PC-9 (cell line): ENCODE measurements at regions of chr9 and their contacts with region 1.

Region 1: DNA sequence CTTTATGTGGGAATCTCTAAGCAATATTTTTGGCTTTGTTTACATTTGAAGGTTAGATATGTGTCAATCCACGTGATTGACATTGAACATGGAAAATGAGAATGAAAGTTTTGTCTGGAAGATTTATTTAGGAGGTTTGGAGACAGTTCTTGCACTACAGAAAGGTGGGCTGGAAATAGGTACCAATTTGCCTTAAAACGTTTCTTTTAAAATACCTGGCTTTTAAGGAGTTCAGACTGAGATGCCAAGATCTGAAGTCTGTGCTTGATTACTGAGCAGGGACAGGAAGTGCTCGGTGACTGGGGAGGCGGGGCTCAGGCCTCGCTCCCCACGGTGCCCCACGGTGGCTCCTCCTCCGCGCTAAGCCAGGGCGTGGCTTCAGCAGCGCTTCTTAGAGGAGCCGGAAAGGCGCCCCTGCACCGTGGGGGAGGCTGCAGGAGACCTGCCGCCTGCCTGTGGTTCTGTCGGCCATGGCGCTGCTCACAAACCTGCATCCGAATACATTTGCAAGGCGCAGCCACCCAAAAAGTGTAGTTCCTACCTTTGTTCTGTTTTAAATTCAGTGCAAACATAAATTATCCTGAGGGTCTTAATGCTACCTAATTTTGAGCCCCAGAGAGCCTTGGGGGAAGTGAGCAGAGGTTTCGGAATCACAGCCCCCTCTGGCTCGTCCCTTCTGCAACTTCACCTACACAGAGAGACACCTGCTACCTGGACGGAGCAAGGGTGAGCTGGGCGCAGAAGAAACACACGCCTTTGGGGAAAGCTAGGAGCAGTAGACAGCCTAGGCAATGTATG is 49.2 kb downstream of the USP20 start:
- DNase-seq: peak; percentile 78 to 92
- H3K4me3 ChIP-seq: peak overlapping the region; percentile 48; the same call in 1 of the 2 replicates
- H3K27ac ChIP-seq: no peak overlapping the region
- H3K4me1 ChIP-seq: peaks cover 36% of the 10 kb centered on the region
- H3K27me3 ChIP-seq: no peaks in the 10 kb centered on the region
- CTCF ChIP-seq: no peak

Region 2: GRCh38 chr9:129835021-129835871 is 49.2 kb before region 1 on chr9 and contains the starts of genes C9orf78 and USP20:
- CTCF ChIA-PET with region 1: no interaction called
- POLR2A ChIA-PET with region 1: no interaction called
- intact Hi-C with region 1: loop called (anchors 1 kb)
- DNase-seq: peak; percentile 84 to 98
- H3K4me3 ChIP-seq: peak within 1 kb of the TSS; percentile 78
- H3K27ac ChIP-seq: no peak within 1 kb of the TSS
- H3K4me1 ChIP-seq: peaks cover 15% of the 10 kb centered on the region
- H3K27me3 ChIP-seq: no peaks in the 10 kb centered on the region
- CTCF ChIP-seq: no peak
- total RNA-seq, gene C9orf78: 39.2 and 51.7 TPM in 2 replicates
- total RNA-seq, gene USP20: 22.1 and 27.8 TPM in 2 replicates

Region 3: DNA sequence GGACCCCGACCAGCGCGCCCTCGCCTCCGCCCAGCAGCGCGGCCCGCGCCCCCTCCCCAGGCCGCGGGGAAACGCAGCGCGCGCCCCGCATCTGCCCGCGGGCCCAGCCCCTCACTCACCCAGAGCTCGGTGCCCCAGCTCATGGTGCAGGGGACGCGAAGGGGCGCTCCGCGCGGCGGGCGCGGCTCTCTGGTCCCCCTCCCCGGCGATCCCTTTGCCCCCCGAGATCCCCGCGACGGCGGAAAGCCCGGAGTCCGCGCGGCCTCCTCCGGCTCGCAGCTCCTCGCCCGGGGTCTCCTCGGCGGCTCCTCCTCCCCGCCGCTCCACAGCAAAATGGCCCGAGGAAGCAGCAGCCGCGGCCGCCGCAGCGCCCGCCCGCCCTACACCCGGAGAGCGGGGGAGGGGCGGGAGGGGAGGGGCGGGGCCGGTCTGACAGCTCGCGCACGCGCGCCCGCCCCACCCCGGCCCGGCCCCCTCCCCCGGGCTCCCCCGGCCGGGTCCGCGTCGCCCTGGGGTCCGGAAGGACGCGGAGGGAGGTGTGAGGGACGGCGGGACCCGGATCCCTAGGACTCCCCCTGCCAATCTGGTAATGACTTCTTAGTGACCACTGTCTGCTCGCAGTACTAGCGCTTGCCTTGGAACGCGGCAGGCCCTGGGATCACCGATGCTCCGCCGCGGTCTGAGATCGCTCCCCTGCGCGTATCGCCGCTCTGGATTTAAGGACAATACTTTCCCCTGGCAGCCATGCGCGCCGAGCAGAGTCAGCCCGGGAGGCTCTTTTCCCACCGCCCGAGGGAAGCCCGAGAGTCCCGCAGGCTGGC is 158.6 kb after region 1 on chr9 and contains the start of gene FNBP1:
- CTCF ChIA-PET with region 1: interaction called, 12 read pairs
- POLR2A ChIA-PET with region 1: interaction called, 5 read pairs
- intact Hi-C with region 1: loop called (anchors 2 kb)
- DNase-seq: peak; percentile 54 to 81
- H3K4me3 ChIP-seq: peak within 1 kb of the TSS; percentile 93
- H3K27ac ChIP-seq: peak within 1 kb of the TSS; percentile 16; the same call in 1 of the 2 replicates
- H3K4me1 ChIP-seq: peaks cover 31% of the 10 kb centered on the region
- H3K27me3 ChIP-seq: no peaks in the 10 kb centered on the region
- CTCF ChIP-seq: no peak
- total RNA-seq, gene FNBP1: 68.2 and 80.7 TPM in 2 replicates

Region 4: DNA sequence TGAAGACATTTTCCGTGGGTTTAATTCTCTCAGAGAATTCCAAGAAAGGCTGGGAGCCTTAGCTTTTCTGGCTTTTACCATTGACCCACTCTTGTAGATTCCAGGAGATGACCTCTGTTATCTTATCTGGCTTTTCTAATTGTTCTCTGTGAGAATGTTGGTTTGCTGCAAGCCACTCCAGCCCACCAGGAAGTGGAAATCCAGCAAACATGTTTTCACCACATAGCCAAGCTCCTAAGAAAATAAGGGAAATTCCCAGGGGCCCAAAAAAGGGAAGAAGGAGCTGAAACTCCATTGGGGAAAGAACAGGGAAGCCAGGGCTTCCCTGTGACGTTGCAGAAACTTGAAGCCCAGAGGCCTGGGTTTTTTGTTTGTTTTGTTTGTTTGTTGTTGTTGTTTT is 189.0 kb after region 1 on chr9:
- CTCF ChIA-PET with region 1: no interaction called
- POLR2A ChIA-PET with region 1: no interaction called
- intact Hi-C with region 1: loop called (anchors 5 kb)
- DNase-seq: no peak
- H3K4me3 ChIP-seq: no peak overlapping the region
- H3K27ac ChIP-seq: no peak overlapping the region
- H3K4me1 ChIP-seq: peaks cover 5% of the 10 kb centered on the region; the same call in 1 of the 2 replicates
- H3K27me3 ChIP-seq: no peaks in the 10 kb centered on the region
- CTCF ChIP-seq: no peak

Region 5: DNA sequence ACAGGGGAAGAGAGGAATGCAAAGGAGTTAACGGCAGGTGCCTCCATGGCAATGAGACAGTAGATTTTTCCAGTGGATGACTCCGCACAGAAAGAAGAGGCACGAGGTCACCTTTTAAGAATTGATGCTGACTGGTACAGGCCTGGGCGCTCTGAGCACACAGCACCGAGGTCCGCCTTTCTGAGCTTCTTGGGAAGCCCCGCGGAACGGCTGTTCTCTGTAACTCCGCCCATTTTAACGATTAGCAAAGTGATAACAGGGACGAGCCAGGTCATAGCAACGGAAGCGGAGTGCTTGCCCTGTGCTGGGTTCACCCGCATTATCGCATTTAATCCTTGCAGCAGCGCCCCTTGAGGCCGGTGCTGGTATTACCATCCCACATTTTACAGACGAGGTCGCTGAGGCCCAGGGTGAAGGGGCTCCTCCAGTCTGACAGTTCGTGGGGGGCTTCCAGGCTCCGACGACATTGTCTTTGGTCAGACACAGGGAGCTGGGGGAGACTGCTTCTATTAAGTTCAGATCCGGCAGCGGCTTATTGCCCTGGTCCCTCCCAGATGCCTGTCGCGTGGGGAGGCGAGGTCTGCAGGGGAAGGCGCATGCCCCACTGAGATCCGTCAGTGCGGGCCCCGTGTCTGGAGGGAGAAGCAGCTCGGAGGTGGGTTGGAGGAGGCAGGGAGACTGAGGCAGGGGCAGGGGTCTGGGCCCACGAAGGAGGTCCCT is 358.8 kb after region 1 on chr9:
- CTCF ChIA-PET with region 1: no interaction called
- POLR2A ChIA-PET with region 1: no interaction called
- intact Hi-C with region 1: loop called (anchors 1 kb)
- DNase-seq: peak in 1 of 2 experiments; percentile 70
- H3K4me3 ChIP-seq: no peak overlapping the region
- H3K27ac ChIP-seq: no peak overlapping the region
- H3K4me1 ChIP-seq: no peaks in the 10 kb centered on the region
- H3K27me3 ChIP-seq: no peaks in the 10 kb centered on the region
- CTCF ChIP-seq: peak; percentile 98

Region 6: GRCh38 chr9:130682490-130683121 is 798.2 kb after region 1 on chr9:
- CTCF ChIA-PET with region 1: no interaction called
- POLR2A ChIA-PET with region 1: no interaction called
- intact Hi-C with region 1: loop called (anchors 10 kb)
- DNase-seq: peak; percentile 63 to 83
- H3K4me3 ChIP-seq: peak overlapping the region; percentile 76
- H3K27ac ChIP-seq: no peak overlapping the region
- H3K4me1 ChIP-seq: peaks cover 6% of the 10 kb centered on the region
- H3K27me3 ChIP-seq: no peaks in the 10 kb centered on the region
- CTCF ChIP-seq: peak; percentile 84